CD4-positive, alpha-beta T cell (primary cell): ENCODE measurements at regions of chr6 and their contacts with region 1.

Region 1: GRCh38 chr6:12233693-12234571 is 56.2 kb upstream of the EDN1 start:
- DNase-seq: peak in 10 of 14 experiments; percentile 8 to 80 (median 18)
- ATAC-seq: peak; percentile 81
- H3K4me3 ChIP-seq: no peak overlapping the region
- H3K4me3 Mint-ChIP-seq: no peak overlapping the region
- H3K27ac ChIP-seq: no peak overlapping the region
- H3K27ac Mint-ChIP-seq: no peak overlapping the region
- H3K4me1 ChIP-seq: peaks cover 15% of the 10 kb centered on the region
- H3K4me1 Mint-ChIP-seq: peaks cover 22% of the 10 kb centered on the region
- H3K27me3 ChIP-seq: no peaks in the 10 kb centered on the region
- H3K27me3 Mint-ChIP-seq: no peaks in the 10 kb centered on the region
- CTCF ChIP-seq: peak; percentile 78

Region 2: DNA sequence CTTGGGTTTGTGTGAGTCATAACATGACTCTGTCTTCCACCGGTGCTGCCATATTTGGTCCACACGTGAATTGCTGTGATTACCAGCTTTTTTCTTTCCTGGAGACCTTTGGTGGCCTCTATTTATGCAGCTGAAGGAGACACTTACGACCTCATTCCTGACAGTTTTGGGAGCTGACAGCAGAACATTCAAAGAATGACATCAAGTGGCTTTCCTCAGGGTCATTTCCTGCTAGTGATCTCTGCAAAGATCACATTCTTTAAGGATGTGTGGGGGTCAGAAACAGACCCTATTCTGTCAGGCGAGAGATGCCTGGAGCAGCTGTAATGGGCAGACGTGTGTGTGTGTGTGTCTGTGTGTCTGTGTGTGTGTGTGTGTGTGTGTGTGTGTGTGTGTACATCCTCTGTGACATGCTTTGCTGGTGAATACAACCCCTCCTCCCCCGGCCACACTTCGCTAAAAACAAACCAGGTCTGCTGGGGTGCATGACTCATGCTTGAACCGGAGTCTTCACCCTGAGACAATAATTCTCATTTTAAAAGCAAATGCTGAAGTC is 580.8 kb before region 1 on chr6:
- CTCF ChIA-PET with region 1: interaction called, 30 read pairs
- POLR2A ChIA-PET with region 1: interaction called, 11 read pairs
- intact Hi-C with region 1: loop called (anchors 1 kb)
- DNase-seq: peak in 12 of 14 experiments; percentile 4 to 68 (median 35)
- ATAC-seq: peak; percentile 57
- H3K4me3 ChIP-seq: no peak overlapping the region
- H3K4me3 Mint-ChIP-seq: no peak overlapping the region
- H3K27ac ChIP-seq: no peak overlapping the region
- H3K27ac Mint-ChIP-seq: no peak overlapping the region
- H3K4me1 ChIP-seq: peaks cover 2% of the 10 kb centered on the region
- H3K4me1 Mint-ChIP-seq: no peaks in the 10 kb centered on the region
- H3K27me3 ChIP-seq: no peaks in the 10 kb centered on the region
- H3K27me3 Mint-ChIP-seq: no peaks in the 10 kb centered on the region
- CTCF ChIP-seq: no peak

Region 3: DNA sequence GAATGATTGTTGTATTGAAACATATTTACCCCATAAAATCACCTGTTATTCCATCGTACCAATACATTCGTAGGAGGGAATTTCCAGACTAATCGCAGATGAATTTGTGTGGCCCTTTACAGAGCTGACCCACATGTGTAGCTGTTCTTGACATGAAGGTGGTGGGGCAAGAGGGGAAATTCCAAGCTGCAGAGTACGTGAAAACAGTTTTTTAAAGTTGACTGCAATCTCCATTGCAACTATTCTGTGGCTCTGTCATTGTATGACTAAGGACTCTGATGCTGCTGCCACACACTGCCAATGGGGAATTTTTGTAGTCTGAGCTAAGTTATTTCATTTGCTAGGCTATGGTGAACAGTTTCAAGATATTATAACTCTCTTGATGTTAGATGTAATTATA is 408.9 kb before region 1 on chr6:
- CTCF ChIA-PET with region 1: interaction called, 3 read pairs
- POLR2A ChIA-PET with region 1: interaction called, 4 read pairs
- intact Hi-C with region 1: loop called (anchors 2 to 5 kb)
- DNase-seq: peak in 2 of 14 experiments; percentile 57 to 67
- ATAC-seq: peak; percentile 56
- H3K4me3 ChIP-seq: no peak overlapping the region
- H3K4me3 Mint-ChIP-seq: no peak overlapping the region
- H3K27ac ChIP-seq: no peak overlapping the region
- H3K27ac Mint-ChIP-seq: no peak overlapping the region
- H3K4me1 ChIP-seq: no peaks in the 10 kb centered on the region
- H3K4me1 Mint-ChIP-seq: peaks cover 8% of the 10 kb centered on the region
- H3K27me3 ChIP-seq: no peaks in the 10 kb centered on the region
- H3K27me3 Mint-ChIP-seq: no peaks in the 10 kb centered on the region
- CTCF ChIP-seq: no peak

Region 4: DNA sequence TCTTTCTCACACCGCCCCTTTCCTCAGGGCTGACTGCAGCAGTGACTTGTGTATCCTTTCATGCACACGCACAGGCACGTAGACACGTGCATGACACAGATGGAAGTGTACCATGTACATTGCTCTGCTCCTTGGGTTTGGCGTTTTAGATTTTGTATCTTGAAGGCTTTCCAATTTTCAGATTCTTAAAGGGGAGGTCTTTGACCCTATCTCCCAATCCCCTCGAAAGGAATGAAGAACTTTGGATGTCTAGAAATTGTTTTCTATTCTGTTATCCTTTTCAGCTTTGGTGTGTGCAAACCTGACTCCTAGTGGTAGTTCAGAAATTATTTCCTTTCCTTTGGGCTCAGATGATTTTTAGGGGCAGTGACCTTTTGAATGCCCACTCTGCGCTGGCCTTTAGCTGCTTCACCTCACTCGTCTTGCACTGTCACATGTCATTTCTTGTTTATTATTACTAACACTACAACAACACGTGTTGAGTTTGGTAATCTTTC is 158.8 kb before region 1 on chr6:
- CTCF ChIA-PET with region 1: no interaction called
- POLR2A ChIA-PET with region 1: no interaction called
- intact Hi-C with region 1: loop called in 1 of 2 experiments (anchors 1 kb)
- DNase-seq: peak in 5 of 14 experiments; percentile 7 to 53 (median 29)
- ATAC-seq: peak; percentile 91
- H3K4me3 ChIP-seq: no peak overlapping the region
- H3K4me3 Mint-ChIP-seq: no peak overlapping the region
- H3K27ac ChIP-seq: no peak overlapping the region
- H3K27ac Mint-ChIP-seq: no peak overlapping the region
- H3K4me1 ChIP-seq: peaks cover 5% of the 10 kb centered on the region
- H3K4me1 Mint-ChIP-seq: peaks cover 66% of the 10 kb centered on the region
- H3K27me3 ChIP-seq: no peaks in the 10 kb centered on the region
- H3K27me3 Mint-ChIP-seq: no peaks in the 10 kb centered on the region
- CTCF ChIP-seq: peak; percentile 60

Region 5: DNA sequence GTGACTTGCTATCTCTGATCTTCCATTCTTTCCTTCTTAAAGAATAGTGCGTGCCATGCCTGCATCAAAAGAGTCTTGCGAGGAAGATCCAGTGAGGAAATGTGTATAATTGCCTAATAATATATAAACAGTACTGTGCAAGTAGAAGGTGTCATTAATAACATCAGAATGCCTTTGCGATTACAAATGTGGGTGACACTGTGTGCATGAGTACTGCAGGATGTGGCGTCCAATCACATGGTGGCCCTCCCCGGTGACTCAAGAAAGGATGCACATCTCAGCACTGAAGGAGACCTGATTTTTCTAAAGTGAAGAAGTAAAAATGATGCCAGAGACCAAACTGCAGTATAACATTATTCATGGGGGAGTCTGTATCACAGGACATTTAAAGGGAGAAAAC is 51.3 kb before region 1 on chr6:
- CTCF ChIA-PET with region 1: no interaction called
- POLR2A ChIA-PET with region 1: no interaction called
- intact Hi-C with region 1: no loop called
- DNase-seq: peak in 1 of 14 experiments; percentile 17
- ATAC-seq: no peak
- H3K4me3 ChIP-seq: no peak overlapping the region
- H3K4me3 Mint-ChIP-seq: no peak overlapping the region
- H3K27ac ChIP-seq: no peak overlapping the region
- H3K27ac Mint-ChIP-seq: no peak overlapping the region
- H3K4me1 ChIP-seq: no peaks in the 10 kb centered on the region
- H3K4me1 Mint-ChIP-seq: no peaks in the 10 kb centered on the region
- H3K27me3 ChIP-seq: no peaks in the 10 kb centered on the region
- H3K27me3 Mint-ChIP-seq: no peaks in the 10 kb centered on the region
- CTCF ChIP-seq: no peak

Region 6: GRCh38 chr6:12262236-12263061 is 28.5 kb after region 1 on chr6:
- CTCF ChIA-PET with region 1: no interaction called
- POLR2A ChIA-PET with region 1: no interaction called
- intact Hi-C with region 1: no loop called
- DNase-seq: no peak
- ATAC-seq: no peak
- H3K4me3 ChIP-seq: no peak overlapping the region
- H3K4me3 Mint-ChIP-seq: no peak overlapping the region
- H3K27ac ChIP-seq: no peak overlapping the region
- H3K27ac Mint-ChIP-seq: no peak overlapping the region
- H3K4me1 ChIP-seq: no peaks in the 10 kb centered on the region
- H3K4me1 Mint-ChIP-seq: no peaks in the 10 kb centered on the region
- H3K27me3 ChIP-seq: no peaks in the 10 kb centered on the region
- H3K27me3 Mint-ChIP-seq: peaks cover 5% of the 10 kb centered on the region
- CTCF ChIP-seq: no peak

Region 7: DNA sequence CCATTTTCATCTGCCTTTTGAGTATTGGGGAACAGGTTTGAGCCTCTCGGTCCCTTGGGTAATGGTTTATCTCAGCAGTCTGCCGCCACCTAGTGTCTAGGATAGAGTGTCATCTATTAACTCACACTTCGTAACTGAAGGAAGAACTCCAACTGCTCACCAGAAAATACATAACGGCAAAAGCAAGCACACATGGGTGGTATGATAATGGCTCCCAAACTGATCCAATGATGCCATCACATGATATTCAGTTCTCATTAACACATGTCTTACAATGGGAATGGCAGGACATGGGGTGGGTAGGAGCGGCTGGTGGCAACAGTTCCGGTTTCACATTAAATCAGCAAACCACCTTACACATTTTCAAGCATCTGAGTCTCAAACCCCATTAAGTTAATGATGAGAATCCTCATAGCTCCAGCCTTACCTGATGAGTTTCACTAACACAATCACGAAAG is 372.0 kb after region 1 on chr6:
- CTCF ChIA-PET with region 1: no interaction called
- POLR2A ChIA-PET with region 1: no interaction called
- intact Hi-C with region 1: loop called in 1 of 2 experiments (anchors 5 kb)
- DNase-seq: peak in 7 of 14 experiments; percentile 3 to 63 (median 34)
- ATAC-seq: no peak
- H3K4me3 ChIP-seq: no peak overlapping the region
- H3K4me3 Mint-ChIP-seq: no peak overlapping the region
- H3K27ac ChIP-seq: no peak overlapping the region
- H3K27ac Mint-ChIP-seq: no peak overlapping the region
- H3K4me1 ChIP-seq: no peaks in the 10 kb centered on the region
- H3K4me1 Mint-ChIP-seq: no peaks in the 10 kb centered on the region
- H3K27me3 ChIP-seq: peaks cover 0 to 9% of the 10 kb centered on the region in 2 experiments
- H3K27me3 Mint-ChIP-seq: peaks cover 27% of the 10 kb centered on the region
- CTCF ChIP-seq: peak; percentile 50